A673 (cell line): ENCODE measurements at regions of chr5 and their contacts with region 1.

Region 1: GRCh38 chr5:134153657-134154056 is 23.1 kb downstream of the SKP1 start:
- DNase-seq: no peak
- H3K4me3 ChIP-seq: no peak overlapping the region
- H3K27ac ChIP-seq: no peak overlapping the region
- H3K4me1 ChIP-seq: no peaks in the 10 kb centered on the region
- H3K27me3 ChIP-seq: no peaks in the 10 kb centered on the region
- CTCF ChIP-seq: no peak

Region 2: GRCh38 chr5:134845852-134846640 is 692.4 kb after region 1 on chr5 and contains the start of gene C5orf24:
- CTCF ChIA-PET with region 1: no interaction called
- POLR2A ChIA-PET with region 1: interaction called, 13 read pairs
- intact Hi-C with region 1: no loop called
- DNase-seq: peak; percentile 98
- H3K4me3 ChIP-seq: peak within 1 kb of the TSS; percentile 93
- H3K27ac ChIP-seq: peak within 1 kb of the TSS; percentile 98
- H3K4me1 ChIP-seq: peaks cover 11% of the 10 kb centered on the region
- H3K27me3 ChIP-seq: no peaks in the 10 kb centered on the region
- CTCF ChIP-seq: no peak
- total RNA-seq, gene C5orf24: 66.4 and 67.6 TPM in 2 replicates